ENCODE measurements at regions of chr5 and their contacts with region 1.

Region 1: DNA sequence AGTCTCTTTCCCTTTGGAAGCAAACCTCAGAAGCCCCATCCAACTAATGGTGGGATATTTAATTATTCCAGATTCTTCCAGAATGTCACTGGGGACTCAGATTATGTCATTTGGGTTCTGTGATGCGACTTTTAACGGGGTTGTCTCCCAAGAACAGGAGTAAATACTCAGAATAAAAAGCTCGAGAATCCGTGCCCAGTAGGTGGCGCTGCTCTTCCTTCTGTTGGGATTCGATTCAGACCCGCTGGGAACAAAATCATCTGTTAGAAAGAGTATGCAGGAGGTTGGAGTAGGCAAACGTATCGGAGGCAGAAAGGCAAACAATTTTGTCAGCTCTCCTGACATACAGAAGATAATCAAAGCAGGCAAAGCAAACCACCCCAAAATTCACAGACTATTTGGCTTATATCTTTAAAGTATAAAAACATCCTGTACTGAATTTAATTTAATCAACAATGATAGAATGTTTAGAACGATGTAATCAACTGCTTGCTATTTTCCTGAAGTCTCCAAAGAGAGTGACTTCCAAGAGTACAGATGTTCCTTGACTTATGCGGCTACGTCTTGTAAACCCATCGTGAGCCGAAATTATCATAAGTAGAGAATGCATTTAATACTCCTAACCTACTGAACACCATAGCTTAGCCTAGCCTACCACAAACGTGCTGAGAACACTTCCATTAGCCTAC is 169.8 kb upstream of the RAI14 start:
- DNase-seq: peak; percentile 76 to 94 (median 84)
- ATAC-seq: peak; percentile 72 to 88 (median 86)
- H3K4me3 ChIP-seq: no peak overlapping the region
- H3K27ac ChIP-seq: peak overlapping the region; percentile 63 to 83 (median 76)
- H3K4me1 ChIP-seq: peaks cover 24 to 54% (median 45%) of the 10 kb centered on the region in 3 donors
- H3K27me3 ChIP-seq: no peaks in the 10 kb centered on the region
- CTCF ChIP-seq: peak; percentile 60 to 73 (median 68)

Region 2: GRCh38 chr5:34898258-34898895 is 412.1 kb after region 1 on chr5:
- intact Hi-C with region 1: loop called in 2 of 3 experiments (anchors 5 to 10 kb)
- DNase-seq: peak in 5 of 6 donors; percentile 49 to 75 (median 52)
- ATAC-seq: peak; percentile 88 to 99 (median 97)
- H3K4me3 ChIP-seq: no peak overlapping the region
- H3K27ac ChIP-seq: no peak overlapping the region
- H3K4me1 ChIP-seq: no peaks in the 10 kb centered on the region
- H3K27me3 ChIP-seq: no peaks in the 10 kb centered on the region
- CTCF ChIP-seq: peak; percentile 66 to 83 (median 75)

Region 3: GRCh38 chr5:34905564-34905963 is 419.3 kb after region 1 on chr5:
- intact Hi-C with region 1: loop called in 1 of 3 experiments (anchors 10 kb)
- DNase-seq: no peak
- ATAC-seq: no peak
- H3K4me3 ChIP-seq: no peak overlapping the region
- H3K27ac ChIP-seq: no peak overlapping the region
- H3K4me1 ChIP-seq: no peaks in the 10 kb centered on the region
- H3K27me3 ChIP-seq: no peaks in the 10 kb centered on the region
- CTCF ChIP-seq: no peak

Region 4: GRCh38 chr5:35003018-35003957 is 517.0 kb after region 1 on chr5:
- intact Hi-C with region 1: loop called in 1 of 3 experiments (anchors 5 kb)
- DNase-seq: peak in 5 of 6 donors; percentile 13 to 80 (median 44)
- ATAC-seq: peak in 3 of 4 donors; percentile 79 to 86 (median 84)
- H3K4me3 ChIP-seq: no peak overlapping the region
- H3K27ac ChIP-seq: no peak overlapping the region
- H3K4me1 ChIP-seq: no peaks in the 10 kb centered on the region
- H3K27me3 ChIP-seq: peaks cover 0 to 3% (median 0%) of the 10 kb centered on the region in 4 donors
- CTCF ChIP-seq: peak; percentile 62 to 89 (median 78)

Measured in pancreas (tissue), 10 donors.